Thyroid gland (tissue), 4 donors: ENCODE measurements at regions of chr5 and their contacts with region 1.

Region 1: DNA sequence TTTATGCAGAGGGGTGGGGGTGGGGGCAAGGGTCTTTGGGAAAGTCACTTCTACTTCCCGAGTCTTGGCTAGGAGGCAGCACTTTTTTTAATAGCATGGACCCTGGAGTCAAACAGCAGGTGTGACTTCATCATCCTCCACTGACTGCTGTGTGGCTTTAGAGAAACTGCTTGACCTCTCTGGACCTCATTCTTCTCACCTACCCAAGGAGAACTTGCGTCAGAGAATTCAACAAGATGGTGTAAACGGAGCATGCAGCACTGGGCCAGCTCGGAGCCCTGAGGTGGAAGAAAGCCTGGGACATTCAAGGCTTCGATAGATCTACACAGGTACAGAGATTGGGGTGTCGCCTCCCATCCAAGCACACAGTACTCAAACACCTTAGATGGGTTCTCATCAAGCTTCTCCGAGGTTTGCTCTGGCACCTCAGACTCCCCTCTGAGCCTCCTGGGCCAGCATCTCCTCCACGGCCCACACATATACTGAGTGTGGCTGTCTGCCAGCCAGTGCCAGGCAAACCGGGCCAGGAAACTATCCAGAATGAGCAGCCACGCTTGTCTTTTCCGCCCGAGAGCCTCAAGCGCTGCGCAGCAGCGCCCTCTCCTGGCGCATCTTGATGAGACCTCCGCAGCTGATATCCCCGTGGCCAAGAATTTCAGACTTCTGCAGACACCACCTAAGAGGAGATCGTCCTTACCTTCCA is 4.6 kb upstream of the SLC25A48 start:
- DNase-seq: peak; percentile 86 to 88
- H3K4me3 ChIP-seq: no peak overlapping the region
- H3K27ac ChIP-seq: no peak overlapping the region
- H3K4me1 ChIP-seq: peaks cover 3 to 8% of the 10 kb centered on the region in 2 donors
- H3K27me3 ChIP-seq: no peaks in the 10 kb centered on the region
- CTCF ChIP-seq: peak; percentile 27 to 80 (median 66)
- POLR2A ChIP-seq: no peak

Region 2: GRCh38 chr5:135466178-135467050 is 363.4 kb before region 1 on chr5:
- intact Hi-C with region 1: loop called (anchors 10 kb)
- DNase-seq: peak; percentile 71 to 77
- H3K4me3 ChIP-seq: no peak overlapping the region
- H3K27ac ChIP-seq: no peak overlapping the region
- H3K4me1 ChIP-seq: peaks cover 3 to 7% of the 10 kb centered on the region in 2 donors
- H3K27me3 ChIP-seq: peaks cover 20% of the 10 kb centered on the region
- CTCF ChIP-seq: peak; percentile 63 to 93 (median 79)
- POLR2A ChIP-seq: no peak

Region 3: GRCh38 chr5:135560858-135561257 is 269.0 kb before region 1 on chr5:
- intact Hi-C with region 1: loop called (anchors 5 kb)
- DNase-seq: peak; percentile 73 to 78
- H3K4me3 ChIP-seq: no peak overlapping the region
- H3K27ac ChIP-seq: no peak overlapping the region
- H3K4me1 ChIP-seq: no peaks in the 10 kb centered on the region
- H3K27me3 ChIP-seq: no peaks in the 10 kb centered on the region
- CTCF ChIP-seq: peak; percentile 40 to 85 (median 63)
- POLR2A ChIP-seq: no peak

Region 4: DNA sequence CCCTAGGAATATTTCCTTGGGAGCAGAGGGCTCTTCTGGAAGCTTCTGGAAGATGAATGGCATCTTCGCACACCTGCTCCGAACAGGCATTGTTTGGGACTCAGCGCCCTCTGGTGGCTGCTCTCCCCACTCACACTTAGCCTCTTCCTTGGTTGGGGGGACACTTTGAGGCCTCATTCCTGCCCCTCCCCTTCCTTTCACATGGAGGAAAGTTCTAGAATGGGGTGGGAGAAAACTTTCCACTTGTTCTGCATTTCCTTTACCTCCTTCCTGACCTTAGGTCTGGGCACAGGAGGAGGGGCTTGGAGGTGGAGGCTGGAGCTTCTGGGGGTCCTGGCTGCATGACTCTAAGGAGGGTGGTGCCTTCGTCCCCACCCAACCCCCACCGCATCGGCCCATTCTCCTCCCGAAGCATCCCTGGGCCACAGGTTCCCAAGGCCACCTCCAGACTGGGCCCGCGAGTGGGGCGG is 382.5 kb after region 1 on chr5:
- intact Hi-C with region 1: no loop called
- DNase-seq: peak; percentile 57 to 59
- H3K4me3 ChIP-seq: no peak overlapping the region
- H3K27ac ChIP-seq: no peak overlapping the region
- H3K4me1 ChIP-seq: no peaks in the 10 kb centered on the region
- H3K27me3 ChIP-seq: no peaks in the 10 kb centered on the region
- CTCF ChIP-seq: peak; percentile 71 to 86 (median 80)
- POLR2A ChIP-seq: no peak